Mammary epithelial cell (primary cell): ENCODE measurements at regions of chr2 and their contacts with region 1.

Region 1: DNA sequence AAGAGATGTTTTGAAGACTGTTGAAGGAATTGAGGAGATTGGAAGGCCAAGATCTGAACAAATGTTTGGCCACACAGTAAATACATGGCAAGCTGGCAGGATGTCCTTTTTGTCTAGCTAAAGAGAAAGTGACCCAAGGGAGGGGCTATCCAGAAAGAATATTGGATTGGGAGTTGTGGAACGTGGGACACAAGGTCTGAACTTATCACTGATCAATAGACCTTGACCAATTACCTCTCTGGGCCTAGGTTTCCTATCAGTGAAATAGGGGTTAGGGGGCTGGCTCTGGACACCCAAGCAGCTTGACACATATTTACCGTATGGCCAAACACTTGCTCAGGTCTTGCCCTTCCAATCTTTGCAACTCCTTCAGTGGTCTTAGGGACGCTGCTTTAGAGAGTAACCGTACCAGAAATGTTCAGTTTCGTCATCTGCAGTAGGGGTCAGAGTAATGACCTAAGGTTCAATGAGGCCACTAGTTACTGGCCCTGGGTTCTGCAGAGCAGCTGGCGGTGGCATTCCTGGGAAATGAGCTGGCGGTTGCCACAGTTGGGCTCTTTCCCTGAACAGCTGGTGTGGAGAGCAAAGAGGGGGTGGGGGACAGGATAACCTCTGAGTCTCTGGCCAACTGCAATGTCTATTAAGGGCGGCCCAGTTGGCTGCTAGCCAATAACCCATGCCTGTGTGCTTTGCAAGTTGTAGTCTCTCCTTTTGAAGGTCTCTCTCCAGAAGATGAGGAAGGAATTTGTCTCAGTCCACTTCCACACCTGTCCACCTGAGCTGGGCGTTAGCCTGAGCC is 70.2 kb upstream of the STPG4 start:
- DNase-seq: peak; percentile 35
- H3K4me3 ChIP-seq: no peak overlapping the region
- H3K27ac ChIP-seq: no peak overlapping the region
- H3K4me1 ChIP-seq: peaks cover 9% of the 10 kb centered on the region
- H3K27me3 ChIP-seq: no peaks in the 10 kb centered on the region
- CTCF ChIP-seq: no peak

Region 2: DNA sequence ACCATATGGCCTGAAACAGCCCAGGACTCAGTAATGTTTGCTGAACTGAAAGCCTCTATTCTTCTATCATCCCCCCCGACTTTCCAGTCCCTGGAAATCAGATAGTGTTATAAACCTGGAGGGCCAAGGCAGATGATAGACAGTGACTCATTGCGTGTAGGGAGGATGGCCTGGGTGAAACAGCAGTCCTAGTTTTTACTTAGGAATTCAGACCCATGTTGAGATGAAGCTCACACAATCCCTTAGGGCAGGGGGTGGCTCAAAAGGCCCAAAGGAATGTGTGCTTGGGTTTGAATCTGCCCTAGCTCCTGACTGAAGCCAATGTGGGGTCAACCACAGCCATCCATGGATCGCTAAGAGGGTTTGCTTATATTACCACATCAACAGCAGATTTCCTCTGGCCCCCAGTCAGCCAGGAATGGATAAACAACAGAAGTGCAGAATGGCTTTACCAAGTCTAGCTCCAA is 26.2 kb before region 1 on chr2:
- CTCF ChIA-PET with region 1: no interaction called
- dilution Hi-C with region 1: no loop called
- in situ Hi-C with region 1: no loop called
- intact Hi-C with region 1: loop called (anchors 2 kb)
- DNase-seq: peak; percentile 96
- H3K4me3 ChIP-seq: no peak overlapping the region
- H3K27ac ChIP-seq: peak overlapping the region; percentile 26
- H3K4me1 ChIP-seq: peaks cover 51% of the 10 kb centered on the region
- H3K27me3 ChIP-seq: no peaks in the 10 kb centered on the region
- CTCF ChIP-seq: no peak

Region 3: DNA sequence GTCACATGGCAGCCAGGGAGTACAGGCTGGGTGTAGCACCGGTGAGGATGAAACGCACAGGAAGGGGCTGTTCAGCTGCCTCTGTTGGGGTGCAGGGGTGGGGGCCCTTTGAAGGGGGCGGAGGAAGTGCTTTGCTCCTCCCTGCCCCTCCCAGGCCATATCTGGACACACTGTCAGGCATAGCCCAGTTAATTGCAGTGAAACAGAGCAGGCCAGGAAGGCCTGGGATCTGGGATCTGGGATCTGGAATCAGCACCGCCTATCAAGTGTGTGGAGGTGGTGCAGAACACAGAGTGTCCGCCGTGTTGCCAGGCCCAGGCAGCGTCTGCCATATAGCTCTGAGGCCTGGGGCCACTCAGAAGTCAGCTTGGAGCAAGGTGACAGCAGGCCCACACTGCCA is 58.4 kb after region 1 on chr2:
- CTCF ChIA-PET with region 1: no interaction called
- dilution Hi-C with region 1: loop called (anchors 5 kb)
- in situ Hi-C with region 1: no loop called
- intact Hi-C with region 1: no loop called
- DNase-seq: no peak
- H3K4me3 ChIP-seq: no peak overlapping the region
- H3K27ac ChIP-seq: no peak overlapping the region
- H3K4me1 ChIP-seq: no peaks in the 10 kb centered on the region
- H3K27me3 ChIP-seq: no peaks in the 10 kb centered on the region
- CTCF ChIP-seq: no peak